CD4-positive, alpha-beta T cell (primary cell): ENCODE measurements at regions of chr5 and their contacts with region 1.

Region 1: GRCh38 chr5:171336521-171337209 is 27.6 kb downstream of the TLX3 start:
- DNase-seq: peak in 4 of 14 experiments; percentile 11 to 44 (median 26)
- ATAC-seq: no peak
- H3K4me3 ChIP-seq: peak overlapping the region; percentile 31
- H3K4me3 Mint-ChIP-seq: peak overlapping the region; percentile 62
- H3K27ac ChIP-seq: no peak overlapping the region
- H3K27ac Mint-ChIP-seq: no peak overlapping the region
- H3K4me1 ChIP-seq: peaks cover 9% of the 10 kb centered on the region
- H3K4me1 Mint-ChIP-seq: peaks cover 11% of the 10 kb centered on the region
- H3K27me3 ChIP-seq: peaks cover 14 to 29% of the 10 kb centered on the region in 2 experiments
- H3K27me3 Mint-ChIP-seq: peaks cover 51% of the 10 kb centered on the region
- CTCF ChIP-seq: no peak

Region 2: GRCh38 chr5:170848033-170848432 is 488.6 kb before region 1 on chr5:
- CTCF ChIA-PET with region 1: no interaction called
- POLR2A ChIA-PET with region 1: no interaction called
- intact Hi-C with region 1: no loop called
- DNase-seq: no peak
- ATAC-seq: no peak
- H3K4me3 ChIP-seq: no peak overlapping the region
- H3K4me3 Mint-ChIP-seq: no peak overlapping the region
- H3K27ac ChIP-seq: no peak overlapping the region
- H3K27ac Mint-ChIP-seq: no peak overlapping the region
- H3K4me1 ChIP-seq: no peaks in the 10 kb centered on the region
- H3K4me1 Mint-ChIP-seq: no peaks in the 10 kb centered on the region
- H3K27me3 ChIP-seq: no peaks in the 10 kb centered on the region
- H3K27me3 Mint-ChIP-seq: peaks cover 19% of the 10 kb centered on the region
- CTCF ChIP-seq: no peak

Region 3: GRCh38 chr5:171152382-171152781 is 184.3 kb before region 1 on chr5:
- CTCF ChIA-PET with region 1: no interaction called
- POLR2A ChIA-PET with region 1: no interaction called
- intact Hi-C with region 1: no loop called
- DNase-seq: no peak
- ATAC-seq: no peak
- H3K4me3 ChIP-seq: no peak overlapping the region
- H3K4me3 Mint-ChIP-seq: no peak overlapping the region
- H3K27ac ChIP-seq: no peak overlapping the region
- H3K27ac Mint-ChIP-seq: no peak overlapping the region
- H3K4me1 ChIP-seq: no peaks in the 10 kb centered on the region
- H3K4me1 Mint-ChIP-seq: no peaks in the 10 kb centered on the region
- H3K27me3 ChIP-seq: no peaks in the 10 kb centered on the region
- H3K27me3 Mint-ChIP-seq: peaks cover 7% of the 10 kb centered on the region
- CTCF ChIP-seq: no peak

Region 4: GRCh38 chr5:171207256-171207847 is 129.3 kb before region 1 on chr5:
- CTCF ChIA-PET with region 1: no interaction called
- POLR2A ChIA-PET with region 1: no interaction called
- intact Hi-C with region 1: loop called (anchors 5 to 10 kb)
- DNase-seq: peak in 3 of 14 experiments; percentile 36 to 40 (median 38)
- ATAC-seq: no peak
- H3K4me3 ChIP-seq: no peak overlapping the region
- H3K4me3 Mint-ChIP-seq: no peak overlapping the region
- H3K27ac ChIP-seq: no peak overlapping the region
- H3K27ac Mint-ChIP-seq: no peak overlapping the region
- H3K4me1 ChIP-seq: no peaks in the 10 kb centered on the region
- H3K4me1 Mint-ChIP-seq: no peaks in the 10 kb centered on the region
- H3K27me3 ChIP-seq: no peaks in the 10 kb centered on the region
- H3K27me3 Mint-ChIP-seq: peaks cover 12% of the 10 kb centered on the region
- CTCF ChIP-seq: peak; percentile 39

Region 5: GRCh38 chr5:171288066-171288465 is 48.6 kb before region 1 on chr5:
- CTCF ChIA-PET with region 1: no interaction called
- POLR2A ChIA-PET with region 1: no interaction called
- intact Hi-C with region 1: no loop called
- DNase-seq: no peak
- ATAC-seq: no peak
- H3K4me3 ChIP-seq: no peak overlapping the region
- H3K4me3 Mint-ChIP-seq: no peak overlapping the region
- H3K27ac ChIP-seq: no peak overlapping the region
- H3K27ac Mint-ChIP-seq: no peak overlapping the region
- H3K4me1 ChIP-seq: no peaks in the 10 kb centered on the region
- H3K4me1 Mint-ChIP-seq: no peaks in the 10 kb centered on the region
- H3K27me3 ChIP-seq: peaks cover 0 to 13% of the 10 kb centered on the region in 2 experiments
- H3K27me3 Mint-ChIP-seq: peaks cover 24% of the 10 kb centered on the region
- CTCF ChIP-seq: no peak